ENCODE measurements at regions of chr15 and their contacts with region 1.

Region 1: DNA sequence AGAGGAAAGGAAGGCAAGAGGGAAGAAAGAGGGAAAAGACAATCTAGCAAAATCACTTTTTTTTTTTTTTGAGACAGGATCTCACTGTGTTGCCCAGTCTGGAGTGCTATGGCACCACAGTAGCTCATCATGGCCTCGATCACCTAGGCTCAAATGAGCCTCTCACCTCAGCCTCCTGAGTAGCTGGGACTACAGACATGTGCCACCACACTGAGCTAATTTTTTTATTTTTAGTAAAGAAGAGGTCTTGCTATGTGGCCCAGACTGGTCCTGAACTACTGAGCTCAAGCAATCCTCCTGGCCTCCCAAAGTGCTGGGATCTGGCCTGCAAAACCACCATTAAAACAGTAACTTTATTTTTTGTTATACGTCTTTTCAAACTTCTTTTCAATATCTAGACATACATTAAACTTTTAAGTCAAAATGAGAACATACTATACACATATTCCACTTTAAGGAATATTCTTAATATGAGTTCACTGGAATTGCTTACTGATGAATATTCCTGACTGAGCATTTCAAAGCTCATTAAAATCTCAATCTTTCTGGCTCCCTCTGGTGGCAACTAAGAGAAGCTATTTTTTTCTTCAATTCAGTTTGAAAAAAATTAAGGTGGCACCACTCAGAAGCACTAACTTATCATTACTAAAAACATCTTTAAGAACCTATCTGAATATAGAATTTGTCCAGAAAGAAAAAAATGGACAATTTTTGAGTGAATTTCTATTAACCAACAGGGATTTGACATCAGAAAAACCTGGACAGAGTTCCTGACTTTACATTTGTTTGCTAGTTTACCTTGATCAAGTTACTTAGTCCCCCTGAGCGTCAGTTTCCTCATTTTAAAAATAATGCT is 40.9 kb downstream of the UACA start:
- DNase-seq: no peak
- H3K4me3 Mint-ChIP-seq: no peak overlapping the region
- H3K27ac Mint-ChIP-seq: no peak overlapping the region
- H3K4me1 Mint-ChIP-seq: no peaks in the 10 kb centered on the region
- H3K27me3 Mint-ChIP-seq: peaks cover 12% of the 10 kb centered on the region

Region 2: GRCh38 chr15:70569091-70569621 is 153.3 kb before region 1 on chr15:
- CTCF ChIA-PET with region 1: interaction called, 14 read pairs
- DNase-seq: no peak
- H3K4me3 Mint-ChIP-seq: no peak overlapping the region
- H3K27ac Mint-ChIP-seq: no peak overlapping the region
- H3K4me1 Mint-ChIP-seq: no peaks in the 10 kb centered on the region
- H3K27me3 Mint-ChIP-seq: peaks cover 29% of the 10 kb centered on the region

Region 3: DNA sequence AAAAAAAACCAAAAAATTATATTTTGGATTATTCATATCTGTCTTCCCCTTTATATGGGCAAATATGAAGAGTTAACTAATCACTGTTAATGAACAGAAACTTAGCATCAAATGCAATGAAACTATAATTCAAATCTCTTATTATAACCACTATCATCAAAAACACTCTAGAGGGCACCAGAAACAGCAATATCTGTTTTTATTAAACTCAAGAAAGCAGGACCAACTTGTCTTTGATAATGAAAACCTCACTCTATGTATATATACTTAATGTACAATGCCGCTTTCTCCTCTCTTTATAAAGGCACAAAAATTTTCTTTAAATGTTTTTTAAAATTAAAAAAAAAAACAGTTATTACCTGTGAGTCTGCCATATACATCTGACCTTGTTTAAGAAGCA is 51.8 kb before region 1 on chr15:
- CTCF ChIA-PET with region 1: interaction called, 18 read pairs
- DNase-seq: no peak
- H3K4me3 Mint-ChIP-seq: no peak overlapping the region
- H3K27ac Mint-ChIP-seq: no peak overlapping the region
- H3K4me1 Mint-ChIP-seq: peaks cover 28% of the 10 kb centered on the region
- H3K27me3 Mint-ChIP-seq: peaks cover 19% of the 10 kb centered on the region

Region 4: GRCh38 chr15:70679919-70680231 is 42.6 kb before region 1 on chr15:
- CTCF ChIA-PET with region 1: interaction called, 53 read pairs
- DNase-seq: no peak
- H3K4me3 Mint-ChIP-seq: no peak overlapping the region
- H3K27ac Mint-ChIP-seq: no peak overlapping the region
- H3K4me1 Mint-ChIP-seq: peaks cover 3% of the 10 kb centered on the region
- H3K27me3 Mint-ChIP-seq: peaks cover 34% of the 10 kb centered on the region

Region 5: DNA sequence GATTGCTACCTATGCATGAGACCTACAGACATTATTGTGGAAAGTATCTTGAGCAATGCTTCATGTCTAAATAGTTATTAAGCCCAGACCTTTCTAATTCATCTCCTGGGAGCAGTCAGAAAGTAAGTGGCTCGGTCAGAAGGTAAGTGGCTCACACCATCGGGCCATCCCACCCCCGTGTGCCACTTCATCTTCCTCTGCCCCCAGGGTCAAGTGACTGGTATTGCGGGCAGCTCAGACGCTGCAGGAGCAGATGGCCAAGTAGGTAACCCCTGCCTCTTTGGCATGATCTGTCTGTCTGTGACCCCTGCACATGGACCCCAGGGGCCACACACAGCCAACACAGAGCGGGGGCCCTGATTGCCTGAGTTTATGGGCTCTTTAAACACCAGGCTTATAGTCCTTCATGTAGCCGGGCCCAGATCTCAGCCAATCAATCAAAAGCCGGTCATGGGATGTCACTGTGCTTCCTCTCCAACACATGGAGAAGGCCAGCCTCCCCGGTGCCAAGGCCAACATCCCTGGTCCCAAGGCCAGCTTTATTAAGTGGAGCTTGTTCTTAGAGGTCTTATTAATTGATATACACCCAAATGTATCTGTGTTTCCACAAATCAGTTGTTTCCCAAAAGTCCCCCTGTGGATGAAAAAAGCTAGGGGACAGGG is 88.6 kb after region 1 on chr15:
- CTCF ChIA-PET with region 1: interaction called, 11 read pairs
- DNase-seq: no peak
- H3K4me3 Mint-ChIP-seq: no peak overlapping the region
- H3K27ac Mint-ChIP-seq: no peak overlapping the region
- H3K4me1 Mint-ChIP-seq: no peaks in the 10 kb centered on the region
- H3K27me3 Mint-ChIP-seq: peaks cover 26% of the 10 kb centered on the region